ENCODE measurements at regions of chr3 and their contacts with region 1.

Region 1: DNA sequence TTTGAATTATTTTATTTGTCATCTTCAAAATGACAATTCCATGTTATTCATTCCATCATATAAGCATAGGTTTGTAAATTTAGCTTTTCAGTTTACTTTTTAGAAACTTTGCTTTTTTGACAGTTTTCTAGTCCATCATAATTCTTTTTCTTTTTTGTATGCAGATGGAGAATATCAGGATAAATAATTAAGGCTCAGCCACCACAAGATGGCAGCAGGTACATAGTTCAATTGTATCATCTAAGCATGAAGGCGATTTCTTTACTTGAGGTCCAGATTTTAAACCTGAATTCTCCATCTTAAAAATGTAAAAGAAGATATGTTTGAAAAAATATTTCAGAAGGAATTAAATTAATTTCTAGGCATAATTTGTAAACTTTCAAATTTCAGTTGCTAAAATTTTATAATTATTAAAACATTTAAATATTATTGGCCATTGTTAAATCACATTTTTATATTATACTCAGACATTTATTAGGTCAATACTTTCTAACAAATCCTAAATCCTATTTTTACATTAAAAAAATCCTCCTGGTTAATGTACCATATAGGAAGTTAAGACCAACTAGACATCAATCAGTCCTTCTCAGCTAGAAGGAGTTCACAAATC is 15.1 kb downstream of the PLSCR5 start:
- DNase-seq: peak in 1 of 5 donors; percentile 11
- ATAC-seq: no peak
- H3K4me3 ChIP-seq: no peak overlapping the region
- H3K27ac ChIP-seq: no peak overlapping the region
- H3K4me1 ChIP-seq: no peaks in the 10 kb centered on the region
- H3K27me3 ChIP-seq: no peaks in the 10 kb centered on the region
- CTCF ChIP-seq: peak; percentile 25 to 69 (median 50)
- POLR2A ChIP-seq: no peak

Region 2: DNA sequence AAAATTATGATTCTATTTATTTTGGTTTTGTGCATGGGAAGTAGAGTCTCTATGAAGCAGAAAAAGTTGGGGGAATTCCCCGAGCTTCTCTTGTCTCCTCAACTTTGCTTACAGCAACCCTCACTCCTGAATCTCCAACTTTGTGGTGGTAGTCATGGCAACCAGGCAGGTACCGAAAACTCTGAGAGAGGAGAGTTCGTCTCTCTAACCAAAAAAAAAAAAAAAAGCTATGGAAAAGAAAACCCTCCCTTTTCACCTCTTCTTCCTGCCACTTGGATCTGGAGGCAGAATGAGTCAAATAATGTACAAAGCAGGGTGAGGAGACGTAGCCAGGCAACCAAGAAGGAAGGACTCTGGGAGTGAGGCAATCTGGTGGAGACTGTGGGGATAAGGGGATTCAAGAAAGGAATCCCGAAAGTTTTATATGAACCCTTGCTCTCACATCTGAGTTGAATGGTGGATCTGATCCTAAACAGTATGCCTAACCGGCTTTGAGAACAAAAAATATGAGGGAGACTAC is 537.2 kb before region 1 on chr3:
- intact Hi-C with region 1: loop called in 1 of 10 experiments (anchors 10 kb)
- DNase-seq: no peak
- ATAC-seq: no peak
- H3K4me3 ChIP-seq: no peak overlapping the region
- H3K27ac ChIP-seq: no peak overlapping the region
- H3K4me1 ChIP-seq: no peaks in the 10 kb centered on the region
- H3K27me3 ChIP-seq: no peaks in the 10 kb centered on the region
- CTCF ChIP-seq: no peak
- POLR2A ChIP-seq: no peak

Region 3: DNA sequence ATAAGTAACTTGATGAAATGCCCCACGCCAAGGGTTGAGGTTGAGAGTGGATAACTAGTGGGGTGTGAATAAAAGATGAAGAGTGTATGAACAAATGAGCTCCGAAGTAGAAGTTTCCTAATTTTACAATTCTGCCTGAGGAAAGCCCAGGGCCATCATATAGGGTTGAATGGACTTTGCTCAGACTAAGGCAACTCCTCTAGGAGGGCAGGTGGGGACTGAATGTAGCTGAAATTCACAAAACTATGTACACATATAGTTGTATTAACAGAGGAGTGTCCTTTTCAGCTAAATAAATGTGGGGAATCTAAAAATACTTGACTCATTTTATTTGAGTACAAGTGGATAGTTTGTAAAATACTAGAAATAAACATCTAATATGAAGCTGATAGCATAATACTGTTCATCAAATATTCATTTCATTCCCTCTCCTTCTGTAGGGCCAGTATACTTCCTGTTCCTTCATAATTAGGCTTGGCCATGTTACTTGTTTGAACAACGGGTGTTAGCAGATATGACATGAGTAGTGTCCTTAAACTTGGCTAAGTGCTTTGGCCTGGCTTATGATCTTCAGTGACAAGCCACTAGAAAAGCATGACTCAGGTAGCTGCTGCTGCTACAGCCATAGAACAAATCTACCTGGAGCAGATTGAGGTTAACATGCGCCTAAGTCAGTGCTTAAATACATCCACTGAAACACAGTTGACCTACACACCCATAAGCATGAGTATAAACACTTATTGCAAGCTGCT is 72.1 kb before region 1 on chr3:
- intact Hi-C with region 1: no loop called
- DNase-seq: no peak
- ATAC-seq: peak in 3 of 4 donors; percentile 66 to 73 (median 71)
- H3K4me3 ChIP-seq: no peak overlapping the region
- H3K27ac ChIP-seq: no peak overlapping the region
- H3K4me1 ChIP-seq: peaks cover 0 to 13% (median 1%) of the 10 kb centered on the region in 12 donors
- H3K27me3 ChIP-seq: no peaks in the 10 kb centered on the region
- CTCF ChIP-seq: no peak
- POLR2A ChIP-seq: no peak

Region 4: DNA sequence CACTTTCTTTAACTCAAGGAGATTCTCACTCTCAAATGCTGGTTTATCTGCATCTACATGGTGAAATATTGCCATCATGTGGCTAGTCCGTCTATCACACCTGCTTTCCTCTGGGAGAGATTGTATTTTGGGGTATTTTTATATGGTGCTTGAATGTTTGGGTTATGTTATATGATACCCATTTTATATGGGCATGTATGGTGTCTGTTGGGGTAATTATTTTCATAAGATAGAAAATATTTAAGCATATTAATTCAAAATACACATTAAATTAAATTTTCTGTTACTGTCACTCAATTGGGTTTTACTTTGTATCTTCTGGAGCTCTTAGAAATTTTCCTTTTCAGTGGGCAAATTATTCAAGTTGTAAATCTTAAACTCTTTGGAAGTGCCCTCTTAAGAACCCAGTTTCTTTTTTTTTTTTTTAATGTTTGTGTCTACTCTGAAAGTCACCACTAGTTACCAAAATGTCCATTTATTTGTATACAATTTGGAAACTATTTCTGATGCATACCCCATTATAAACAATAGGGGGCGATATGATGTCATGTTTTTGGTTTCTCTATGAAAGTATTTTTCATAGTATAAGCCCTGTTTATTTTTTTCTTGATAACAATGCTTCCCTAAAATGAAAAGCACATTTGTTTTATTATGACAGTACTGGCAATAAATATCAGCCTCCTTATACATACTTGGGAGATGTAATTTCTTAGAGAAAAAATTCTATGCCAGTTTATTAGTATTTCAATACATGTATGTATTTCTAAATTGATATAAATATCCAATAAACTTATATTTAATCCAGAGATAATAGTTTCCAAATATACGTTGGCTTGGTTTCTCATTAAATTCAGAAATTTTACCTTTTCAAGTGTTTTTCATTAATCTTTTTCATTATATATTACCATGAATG is 51.2 kb after region 1 on chr3:
- intact Hi-C with region 1: loop called in 1 of 10 experiments (anchors 10 kb)
- DNase-seq: no peak
- ATAC-seq: no peak
- H3K4me3 ChIP-seq: no peak overlapping the region
- H3K27ac ChIP-seq: no peak overlapping the region
- H3K4me1 ChIP-seq: no peaks in the 10 kb centered on the region
- H3K27me3 ChIP-seq: no peaks in the 10 kb centered on the region
- CTCF ChIP-seq: peak; percentile 25 to 57 (median 42)
- POLR2A ChIP-seq: no peak